Activated CD4-positive, alpha-beta memory T cell treated with anti-CD3 and anti-CD28 coated beads, Interleukin-2, amount 10 ng/mL, durations not matched to agents 7 days and 5 days (primary cell): ENCODE measurements at regions of chr4 and their contacts with region 1.

Region 1: GRCh38 chr4:86927843-86928395 is 6.9 kb upstream of the AFF1 start:
- DNase-seq: no peak
- H3K4me3 Mint-ChIP-seq: no peak overlapping the region
- H3K27ac Mint-ChIP-seq: no peak overlapping the region
- H3K4me1 Mint-ChIP-seq: peaks cover 5% of the 10 kb centered on the region
- H3K27me3 Mint-ChIP-seq: no peaks in the 10 kb centered on the region

Region 2: GRCh38 chr4:86816501-86817273 is 111.2 kb before region 1 on chr4:
- CTCF ChIA-PET with region 1: no interaction called
- POLR2A ChIA-PET with region 1: no interaction called
- DNase-seq: no peak
- H3K4me3 Mint-ChIP-seq: no peak overlapping the region
- H3K27ac Mint-ChIP-seq: no peak overlapping the region
- H3K4me1 Mint-ChIP-seq: no peaks in the 10 kb centered on the region
- H3K27me3 Mint-ChIP-seq: no peaks in the 10 kb centered on the region

Region 3: GRCh38 chr4:87032884-87033533 is 105.1 kb after region 1 on chr4:
- CTCF ChIA-PET with region 1: no interaction called
- POLR2A ChIA-PET with region 1: no interaction called
- DNase-seq: no peak
- H3K4me3 Mint-ChIP-seq: no peak overlapping the region
- H3K27ac Mint-ChIP-seq: no peak overlapping the region
- H3K4me1 Mint-ChIP-seq: peaks cover 7% of the 10 kb centered on the region
- H3K27me3 Mint-ChIP-seq: no peaks in the 10 kb centered on the region

Region 4: DNA sequence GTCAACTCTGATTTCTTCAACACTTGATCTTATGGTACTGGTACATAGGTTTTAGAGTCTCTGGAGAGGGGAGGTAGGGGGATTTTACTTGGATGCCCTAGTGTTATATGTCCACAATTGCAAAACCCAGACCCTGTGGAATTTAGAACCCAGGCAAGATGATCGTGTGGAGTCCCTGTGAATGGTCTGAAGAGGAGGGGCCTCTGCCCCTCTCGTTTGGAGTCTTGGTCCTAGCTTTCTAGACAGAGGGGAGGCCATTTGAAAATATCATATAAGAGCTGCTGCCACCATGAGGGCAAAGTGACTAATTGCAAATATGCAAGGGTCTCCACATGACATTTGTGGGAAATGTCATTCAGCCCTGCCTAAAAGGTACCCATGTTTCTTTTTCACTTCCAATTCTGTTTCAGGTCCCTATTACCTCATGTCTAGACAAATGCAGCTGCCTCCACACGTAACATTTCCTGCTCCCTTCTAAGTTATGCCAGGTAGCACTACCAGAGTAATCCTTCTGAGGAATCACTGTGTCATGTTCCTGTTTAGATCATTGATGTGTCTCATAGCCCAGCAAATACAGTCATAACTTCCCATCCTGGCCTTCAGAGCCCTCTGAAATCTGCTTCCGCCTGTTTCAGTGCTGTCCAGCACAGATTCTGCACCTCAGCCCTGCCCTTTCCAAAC is 165.7 kb after region 1 on chr4:
- CTCF ChIA-PET with region 1: interaction called, 160 read pairs
- POLR2A ChIA-PET with region 1: interaction called, 6 read pairs
- DNase-seq: peak; percentile 29
- H3K4me3 Mint-ChIP-seq: no peak overlapping the region
- H3K27ac Mint-ChIP-seq: no peak overlapping the region
- H3K4me1 Mint-ChIP-seq: peaks cover 18% of the 10 kb centered on the region
- H3K27me3 Mint-ChIP-seq: no peaks in the 10 kb centered on the region

Region 5: DNA sequence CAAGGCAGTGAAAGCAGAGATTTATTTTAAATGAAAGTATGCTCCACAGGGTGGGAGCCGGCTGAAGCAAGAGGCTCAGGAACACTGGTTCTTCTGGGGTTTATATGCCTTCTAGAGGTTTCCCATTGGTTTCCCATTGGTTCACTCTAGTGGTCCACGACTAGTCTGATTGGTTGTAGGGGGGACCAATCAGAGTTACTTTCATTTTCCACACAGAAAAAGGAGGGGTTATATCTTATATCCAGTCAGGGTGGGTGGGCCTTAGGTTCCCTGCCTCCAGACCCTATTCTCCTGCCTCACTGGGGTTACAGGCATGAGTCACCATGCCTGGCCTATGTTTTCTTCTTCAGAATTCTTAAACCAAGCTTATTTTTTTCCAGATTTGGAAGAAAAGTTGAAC is 190.9 kb after region 1 on chr4:
- CTCF ChIA-PET with region 1: interaction called, 10 read pairs
- POLR2A ChIA-PET with region 1: no interaction called
- DNase-seq: no peak
- H3K4me3 Mint-ChIP-seq: no peak overlapping the region
- H3K27ac Mint-ChIP-seq: no peak overlapping the region
- H3K4me1 Mint-ChIP-seq: peaks cover 12% of the 10 kb centered on the region
- H3K27me3 Mint-ChIP-seq: no peaks in the 10 kb centered on the region